ENCODE measurements at regions of chr6 and their contacts with region 1.

Region 1: DNA sequence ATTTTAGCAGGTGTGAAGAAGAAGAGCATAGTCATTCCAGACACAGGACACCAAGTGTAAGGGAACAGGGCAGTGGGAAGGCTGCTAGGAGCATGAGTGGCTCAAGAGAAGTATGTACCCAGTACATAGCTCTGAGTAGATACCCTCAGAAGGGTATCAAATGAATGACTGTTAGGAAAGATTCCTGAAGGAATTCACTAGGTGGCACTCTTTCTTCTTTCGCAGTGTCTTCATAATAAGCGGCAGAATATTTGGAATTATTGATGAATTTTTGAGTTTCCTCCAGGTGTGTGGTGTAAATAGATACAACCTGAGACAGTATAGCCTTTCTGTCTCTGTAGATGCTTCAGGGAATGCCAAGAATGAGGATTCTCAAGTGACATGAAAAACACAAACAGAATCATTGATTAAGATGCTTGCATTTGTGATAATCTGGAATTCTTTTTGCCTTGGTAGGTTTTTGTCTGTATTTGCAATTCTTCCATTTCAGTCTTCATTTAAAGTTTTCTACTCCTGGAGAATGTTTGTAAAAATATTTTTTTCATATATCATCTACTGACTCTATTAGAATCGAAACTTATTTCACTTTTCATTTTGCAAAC is 264.3 kb upstream of the RIMS1 start:
- DNase-seq: no peak

Region 2: GRCh38 chr6:71496018-71496721 is 125.8 kb before region 1 on chr6:
- intact Hi-C with region 1: no loop called
- DNase-seq: no peak

Region 3: GRCh38 chr6:72084992-72085569 is 463.1 kb after region 1 on chr6:
- intact Hi-C with region 1: loop called (anchors 10 kb)
- DNase-seq: no peak